ENCODE measurements at regions of chr10 and their contacts with region 1.

Region 1: DNA sequence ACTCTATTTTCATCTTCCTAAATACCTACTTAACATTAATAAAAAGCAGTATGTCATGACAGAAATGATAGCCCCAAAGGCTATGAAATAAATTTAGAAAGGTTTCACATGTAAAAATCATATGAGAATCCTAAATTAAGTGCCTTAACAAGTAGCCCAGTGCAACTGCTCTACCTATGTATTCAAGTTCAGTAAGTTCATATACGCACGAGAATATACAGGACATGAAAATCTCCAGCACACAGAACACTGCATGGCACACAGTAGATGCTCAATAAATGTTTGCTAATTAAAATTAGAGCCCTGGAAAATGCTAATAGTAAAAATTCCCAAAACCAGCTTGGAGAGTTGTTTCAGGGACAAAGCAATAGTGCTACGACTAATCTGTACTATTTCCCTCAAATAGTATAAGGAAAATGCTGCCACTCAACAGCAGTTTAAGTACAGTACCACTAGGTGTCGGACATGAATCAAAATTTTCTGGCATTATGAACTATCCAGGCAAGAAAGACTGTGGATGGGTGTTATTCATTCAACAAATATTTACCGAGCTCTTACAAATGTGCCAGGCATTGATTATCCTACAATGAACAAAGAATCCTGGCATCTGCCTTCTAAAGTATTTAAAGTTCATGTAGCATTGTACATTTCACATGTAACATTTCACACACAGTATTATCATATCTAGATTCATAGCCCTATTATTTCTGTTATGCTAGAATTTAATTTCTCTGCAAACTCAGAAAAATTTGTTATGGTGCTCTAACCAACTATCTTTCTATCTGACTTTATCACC is 80.9 kb downstream of the ARHGAP21 start:
- DNase-seq: peak; percentile 88
- ATAC-seq: peak; percentile 72
- H3K4me3 ChIP-seq: no peak overlapping the region
- H3K27ac ChIP-seq: peak overlapping the region; percentile 64
- H3K4me1 ChIP-seq: peaks cover 34% of the 10 kb centered on the region
- H3K27me3 ChIP-seq: no peaks in the 10 kb centered on the region
- CTCF ChIP-seq: peak; percentile 83

Region 2: DNA sequence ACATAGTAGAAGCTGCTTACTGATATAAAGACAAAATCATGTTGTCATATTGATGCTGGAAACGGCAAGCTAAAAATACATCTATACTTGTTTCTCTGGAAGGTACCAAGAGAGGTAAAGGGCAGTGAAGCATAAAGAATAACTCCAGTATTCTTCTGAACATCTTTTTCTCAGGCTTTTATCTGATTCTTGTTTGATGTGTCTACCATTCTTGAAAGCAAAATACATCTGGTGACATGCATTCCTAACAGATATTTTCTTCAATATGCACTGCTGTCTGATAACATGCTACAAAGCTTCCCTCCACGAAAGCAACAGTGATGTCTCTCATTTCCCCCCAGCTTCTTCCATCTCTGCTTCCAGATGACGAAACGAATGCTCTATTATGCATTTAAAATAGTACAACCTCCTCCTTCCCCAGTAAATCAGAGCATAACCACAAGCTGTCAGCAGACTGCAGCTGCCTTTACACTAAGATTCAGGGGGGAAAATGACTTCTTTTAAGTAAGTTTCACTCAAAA is 20.0 kb before region 1 on chr10:
- CTCF ChIA-PET with region 1: no interaction called
- POLR2A ChIA-PET with region 1: no interaction called
- intact Hi-C with region 1: no loop called
- DNase-seq: no peak
- ATAC-seq: no peak
- H3K4me3 ChIP-seq: no peak overlapping the region
- H3K27ac ChIP-seq: no peak overlapping the region
- H3K4me1 ChIP-seq: peaks cover 16% of the 10 kb centered on the region
- H3K27me3 ChIP-seq: no peaks in the 10 kb centered on the region
- CTCF ChIP-seq: no peak

Region 3: GRCh38 chr10:24843256-24843655 is 200.4 kb after region 1 on chr10:
- CTCF ChIA-PET with region 1: interaction called, 10 read pairs
- POLR2A ChIA-PET with region 1: no interaction called
- intact Hi-C with region 1: no loop called
- DNase-seq: no peak
- ATAC-seq: no peak
- H3K4me3 ChIP-seq: no peak overlapping the region
- H3K27ac ChIP-seq: no peak overlapping the region
- H3K4me1 ChIP-seq: peaks cover 7% of the 10 kb centered on the region
- H3K27me3 ChIP-seq: no peaks in the 10 kb centered on the region
- CTCF ChIP-seq: no peak

Region 4: GRCh38 chr10:24901686-24902399 is 259.0 kb after region 1 on chr10:
- CTCF ChIA-PET with region 1: no interaction called
- POLR2A ChIA-PET with region 1: no interaction called
- intact Hi-C with region 1: loop called (anchors 5 kb)
- DNase-seq: peak; percentile 93
- ATAC-seq: peak; percentile 91
- H3K4me3 ChIP-seq: peak overlapping the region; percentile 20; the same call in 1 of the 2 replicates
- H3K27ac ChIP-seq: peak overlapping the region; percentile 93
- H3K4me1 ChIP-seq: peaks cover 27% of the 10 kb centered on the region
- H3K27me3 ChIP-seq: no peaks in the 10 kb centered on the region
- CTCF ChIP-seq: no peak

Region 5: DNA sequence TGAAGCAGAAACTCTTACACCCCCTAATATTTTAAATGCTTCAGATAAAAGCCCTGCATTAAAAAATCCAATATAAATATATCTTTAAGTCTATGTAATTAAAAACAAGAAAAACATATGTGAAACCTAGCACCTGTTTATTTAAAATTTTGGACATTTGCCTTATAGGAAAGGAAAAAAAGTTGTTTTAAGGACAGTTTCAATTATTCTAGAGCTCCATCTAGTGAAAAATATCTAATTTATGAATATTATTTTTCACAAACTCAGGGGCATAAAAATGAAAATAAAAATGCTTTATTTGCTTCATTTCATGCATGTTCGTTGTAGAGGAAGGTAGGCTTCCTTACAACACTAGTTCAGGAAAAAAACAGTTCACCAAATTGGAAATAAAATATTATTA is 347.0 kb after region 1 on chr10:
- CTCF ChIA-PET with region 1: interaction called, 3 read pairs
- POLR2A ChIA-PET with region 1: no interaction called
- intact Hi-C with region 1: loop called (anchors 1 kb)
- DNase-seq: peak; percentile 39
- ATAC-seq: no peak; the same call in 1 of the 2 replicates
- H3K4me3 ChIP-seq: no peak overlapping the region
- H3K27ac ChIP-seq: no peak overlapping the region
- H3K4me1 ChIP-seq: 0 out of 2 replicates have a peak, but pooled peaks cover 8% of the 10 kb centered on the region
- H3K27me3 ChIP-seq: no peaks in the 10 kb centered on the region
- CTCF ChIP-seq: peak; percentile 55

Measured in PC-3 (cell line).